Activated CD8-positive, alpha-beta T cell treated with anti-CD3 and anti-CD28 coated beads for 36 hours (primary cell): ENCODE measurements at regions of chr10 and their contacts with region 1.

Region 1: DNA sequence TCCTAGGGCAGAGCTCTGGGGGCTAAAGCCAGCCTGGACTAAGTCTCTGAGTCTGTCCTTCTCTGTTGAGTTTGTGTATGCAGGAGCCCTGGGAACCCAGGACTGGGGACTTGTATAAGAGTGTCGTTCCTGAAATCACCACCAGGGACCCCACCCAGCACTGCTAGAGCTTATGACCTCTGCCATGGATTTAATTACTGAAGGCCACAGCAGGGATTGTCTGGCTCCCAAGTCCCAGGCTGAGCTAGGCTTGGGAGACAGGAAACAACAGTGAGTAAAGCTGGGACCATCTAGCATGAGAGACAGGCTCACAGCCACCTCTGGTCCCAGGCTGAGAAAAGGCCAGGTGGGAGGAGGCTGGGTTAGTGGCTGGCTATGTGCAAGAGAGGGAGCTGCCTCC is 1.4 kb upstream of the TSPAN15 start:
- DNase-seq: peak; percentile 68
- ATAC-seq: peak; percentile 66
- H3K4me3 Mint-ChIP-seq: no peak overlapping the region
- H3K27ac Mint-ChIP-seq: no peak overlapping the region
- H3K4me1 Mint-ChIP-seq: peaks cover 9% of the 10 kb centered on the region
- H3K27me3 Mint-ChIP-seq: peaks cover 2% of the 10 kb centered on the region
- CTCF ChIP-seq: peak; percentile 51

Region 2: GRCh38 chr10:69468751-69469089 is 18.9 kb after region 1 on chr10:
- CTCF ChIA-PET with region 1: interaction called, 11 read pairs
- POLR2A ChIA-PET with region 1: interaction called, 4 read pairs
- intact Hi-C with region 1: no loop called
- DNase-seq: no peak
- ATAC-seq: no peak
- H3K4me3 Mint-ChIP-seq: no peak overlapping the region
- H3K27ac Mint-ChIP-seq: no peak overlapping the region
- H3K4me1 Mint-ChIP-seq: peaks cover 5% of the 10 kb centered on the region
- H3K27me3 Mint-ChIP-seq: peaks cover 3% of the 10 kb centered on the region
- CTCF ChIP-seq: no peak

Region 3: GRCh38 chr10:69527961-69528360 is 78.1 kb after region 1 on chr10:
- CTCF ChIA-PET with region 1: no interaction called
- POLR2A ChIA-PET with region 1: no interaction called
- intact Hi-C with region 1: no loop called
- DNase-seq: no peak
- ATAC-seq: no peak
- H3K4me3 Mint-ChIP-seq: no peak overlapping the region
- H3K27ac Mint-ChIP-seq: no peak overlapping the region
- H3K4me1 Mint-ChIP-seq: no peaks in the 10 kb centered on the region
- H3K27me3 Mint-ChIP-seq: peaks cover 9% of the 10 kb centered on the region
- CTCF ChIP-seq: no peak